Tibial artery (tissue), 4 donors: ENCODE measurements at regions of chr5 and their contacts with region 1.

Region 1: DNA sequence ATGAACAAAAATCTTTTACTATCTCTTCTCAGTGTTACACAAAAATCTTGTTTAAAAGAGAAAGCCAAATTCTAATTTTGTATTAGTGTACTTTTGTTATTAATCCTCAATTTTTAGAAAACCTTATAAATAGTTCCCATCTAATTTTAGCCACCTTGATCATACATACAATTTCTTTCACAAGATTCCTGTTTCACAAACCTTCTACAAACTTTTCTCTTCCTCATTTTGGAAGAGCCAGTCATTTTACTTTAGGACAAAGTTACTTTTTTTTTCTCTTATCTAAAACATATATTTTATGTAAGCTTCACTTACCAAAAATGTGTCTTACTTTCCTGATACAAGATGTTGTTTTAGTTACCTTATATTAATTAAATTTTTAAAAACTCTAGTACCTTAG is 161.3 kb downstream of the YIPF5 start:
- DNase-seq: no peak
- H3K4me3 ChIP-seq: no peak overlapping the region
- H3K27ac ChIP-seq: no peak overlapping the region
- H3K4me1 ChIP-seq: no peaks in the 10 kb centered on the region
- H3K27me3 ChIP-seq: no peaks in the 10 kb centered on the region
- CTCF ChIP-seq: no peak

Region 2: DNA sequence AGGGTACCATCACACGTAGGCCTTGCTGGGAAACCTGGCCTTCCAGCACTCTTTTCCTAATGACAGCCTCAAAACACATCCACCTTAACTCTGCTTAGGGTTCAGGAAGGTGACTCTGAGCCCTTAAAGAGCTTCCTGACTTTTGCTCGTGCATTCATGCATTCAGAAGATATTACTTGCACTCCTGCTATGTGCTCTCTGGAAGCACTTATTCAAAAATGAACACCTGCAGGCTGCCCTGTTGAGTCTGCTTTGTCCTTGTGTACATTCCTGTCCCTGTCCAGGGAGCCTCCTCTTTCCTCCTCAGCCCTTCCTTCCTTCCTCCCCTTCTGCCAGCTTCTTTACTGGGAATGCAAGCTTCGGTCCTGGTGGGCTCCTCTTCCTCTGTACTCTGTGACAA is 1745.8 kb before region 1 on chr5:
- intact Hi-C with region 1: loop called (anchors 5 kb)
- DNase-seq: no peak
- H3K4me3 ChIP-seq: no peak overlapping the region
- H3K27ac ChIP-seq: no peak overlapping the region
- H3K4me1 ChIP-seq: no peaks in the 10 kb centered on the region
- H3K27me3 ChIP-seq: no peaks in the 10 kb centered on the region
- CTCF ChIP-seq: no peak

Region 3: DNA sequence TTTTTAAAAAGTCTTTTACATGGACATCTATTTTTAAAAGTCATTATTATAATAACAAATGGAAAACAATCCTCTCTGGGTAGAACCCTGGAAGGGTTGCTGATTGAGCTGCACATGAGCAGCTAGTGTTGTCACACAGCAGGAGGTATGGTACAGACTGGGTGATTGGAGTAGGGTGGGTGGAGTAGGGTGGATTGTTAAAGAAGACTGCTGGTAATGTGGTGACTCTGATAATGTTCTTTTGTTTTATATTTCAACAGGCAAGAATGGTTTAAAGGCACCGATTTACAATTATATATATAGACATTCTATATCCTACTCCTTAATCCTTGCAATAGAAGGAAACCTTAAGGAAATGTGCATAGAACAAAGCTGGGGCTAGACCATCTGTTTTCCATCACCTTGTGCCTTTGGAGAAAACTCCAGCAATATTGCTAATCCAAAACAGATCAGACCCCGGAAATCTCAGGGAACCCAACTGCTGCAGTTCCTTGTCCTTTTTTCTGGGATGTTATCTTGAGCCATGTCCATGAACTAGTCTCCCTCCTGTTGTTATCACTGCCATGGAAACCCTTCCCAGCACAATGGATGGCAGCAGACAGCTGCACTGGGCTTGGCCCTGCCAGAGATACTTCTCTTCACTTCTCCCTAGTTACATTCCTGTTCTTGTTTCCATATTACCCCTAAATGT is 31.6 kb after region 1 on chr5:
- intact Hi-C with region 1: no loop called
- DNase-seq: no peak
- H3K4me3 ChIP-seq: no peak overlapping the region
- H3K27ac ChIP-seq: no peak overlapping the region
- H3K4me1 ChIP-seq: peaks cover 0 to 14% (median 0%) of the 10 kb centered on the region in 4 donors
- H3K27me3 ChIP-seq: no peaks in the 10 kb centered on the region
- CTCF ChIP-seq: no peak